Activated CD4-positive, alpha-beta T cell treated with anti-CD3 and anti-CD28 coated beads, Interleukin-2, amount 10 ng/mL, durations not matched to agents 7 days and 5 days (primary cell): ENCODE measurements at regions of chr3 and their contacts with region 1.

Region 1: GRCh38 chr3:57755668-57756527 is at the start of gene SLMAP:
- DNase-seq: peak; percentile 98
- H3K4me3 Mint-ChIP-seq: peak within 1 kb of the TSS; percentile 98
- H3K27ac Mint-ChIP-seq: peak within 1 kb of the TSS; percentile 98
- H3K4me1 Mint-ChIP-seq: peaks cover 43% of the 10 kb centered on the region
- H3K27me3 Mint-ChIP-seq: peaks cover 5% of the 10 kb centered on the region
- total RNA-seq, gene SLMAP: 47.2 to 51.2 TPM

Region 2: DNA sequence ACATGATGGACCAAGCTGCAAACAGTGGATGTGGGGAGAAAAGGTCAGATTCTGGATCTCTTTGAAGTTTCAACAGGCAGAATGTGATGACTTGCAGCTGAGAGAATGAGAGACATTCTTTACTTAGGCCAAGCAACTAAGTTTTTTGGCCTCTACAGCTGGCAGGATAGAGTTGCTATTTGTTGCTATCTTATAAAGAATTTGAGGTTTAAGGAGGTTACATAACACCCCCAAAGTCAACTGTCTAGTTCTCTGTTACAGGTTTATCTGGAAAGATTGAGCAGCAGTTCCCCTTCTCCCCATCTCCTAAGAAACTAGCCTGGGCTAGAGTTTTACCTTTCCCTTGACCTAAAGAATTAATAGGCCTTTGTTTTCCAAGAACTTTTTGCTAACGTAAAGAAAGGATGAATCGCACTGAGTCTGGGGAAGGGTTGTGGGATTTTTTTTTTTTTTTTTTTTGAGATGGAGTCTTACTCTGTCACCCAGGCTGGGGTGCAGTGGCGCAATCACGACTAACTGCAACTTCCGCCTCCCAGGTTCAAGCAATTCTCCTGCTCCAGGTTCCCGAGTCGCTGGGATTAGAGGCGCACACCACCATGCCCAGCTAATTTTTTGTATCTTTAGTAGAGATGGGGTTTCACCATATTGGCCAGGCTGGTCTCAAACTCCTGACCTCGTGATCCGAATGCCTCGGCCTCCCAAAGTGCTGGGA is 26.4 kb before region 1 on chr3:
- CTCF ChIA-PET with region 1: no interaction called
- POLR2A ChIA-PET with region 1: interaction called, 12 read pairs
- DNase-seq: no peak
- H3K4me3 Mint-ChIP-seq: no peak overlapping the region
- H3K27ac Mint-ChIP-seq: no peak overlapping the region
- H3K4me1 Mint-ChIP-seq: no peaks in the 10 kb centered on the region
- H3K27me3 Mint-ChIP-seq: no peaks in the 10 kb centered on the region